Right ventricle myocardium superior (tissue), 1 donor: ENCODE measurements at regions of chr3 and their contacts with region 1.

Region 1: GRCh38 chr3:160754855-160755747 is 930 bp upstream of the PPM1L start:
- DNase-seq: peak; percentile 96
- ATAC-seq: peak; percentile 93

Region 2: DNA sequence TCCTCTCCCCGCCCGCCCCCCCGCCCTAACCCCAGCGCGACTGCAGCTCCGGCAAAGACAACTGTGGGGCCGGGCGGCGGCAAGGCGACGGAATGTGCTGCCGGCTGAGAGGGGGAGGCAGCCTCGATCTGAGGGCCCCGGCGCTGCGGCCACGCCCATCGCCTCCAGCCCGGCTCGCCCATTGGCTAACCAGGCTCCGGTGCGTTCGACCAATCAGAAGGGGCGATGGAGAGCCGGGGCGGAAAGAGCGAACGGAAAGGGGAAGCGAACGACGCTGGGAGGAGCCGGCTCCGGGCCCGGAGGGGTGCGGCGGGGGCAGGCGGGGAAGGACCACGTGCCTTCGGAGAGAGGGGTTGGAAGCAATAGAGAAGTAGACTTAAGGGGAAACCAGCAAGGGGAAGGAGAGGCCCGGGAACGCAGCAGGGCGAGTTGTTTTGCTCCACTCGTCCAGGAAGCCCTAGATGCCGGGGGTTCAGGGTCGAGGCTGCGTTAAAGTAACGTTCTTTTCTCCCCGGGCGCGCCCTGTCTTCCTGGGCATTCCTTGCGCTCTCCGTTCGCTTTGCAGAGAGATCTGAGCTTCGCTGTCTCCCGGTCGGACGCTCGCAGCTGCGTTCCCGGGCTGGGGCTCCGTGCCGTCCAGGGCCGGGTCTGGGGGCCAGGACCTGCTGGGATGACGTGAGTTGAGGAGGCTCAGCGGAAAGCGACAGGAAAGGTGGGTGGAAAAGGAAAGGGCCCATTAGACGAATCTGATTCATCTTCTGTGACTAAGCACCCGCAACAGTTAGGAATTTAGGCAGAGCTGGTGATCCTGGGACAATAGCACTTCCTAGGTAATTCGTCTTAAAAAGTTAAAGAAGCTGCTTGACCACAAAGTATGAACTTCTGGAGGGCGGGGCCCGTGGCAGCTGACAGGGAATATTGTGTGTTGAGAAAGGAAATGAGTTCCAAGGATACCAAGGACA is 189.4 kb before region 1 on chr3 and contains the start of gene KPNA4:
- intact Hi-C with region 1: loop called (anchors 10 kb)
- DNase-seq: peak; percentile 98
- ATAC-seq: peak; percentile 97
- total RNA-seq, gene KPNA4: 114 TPM

Region 3: DNA sequence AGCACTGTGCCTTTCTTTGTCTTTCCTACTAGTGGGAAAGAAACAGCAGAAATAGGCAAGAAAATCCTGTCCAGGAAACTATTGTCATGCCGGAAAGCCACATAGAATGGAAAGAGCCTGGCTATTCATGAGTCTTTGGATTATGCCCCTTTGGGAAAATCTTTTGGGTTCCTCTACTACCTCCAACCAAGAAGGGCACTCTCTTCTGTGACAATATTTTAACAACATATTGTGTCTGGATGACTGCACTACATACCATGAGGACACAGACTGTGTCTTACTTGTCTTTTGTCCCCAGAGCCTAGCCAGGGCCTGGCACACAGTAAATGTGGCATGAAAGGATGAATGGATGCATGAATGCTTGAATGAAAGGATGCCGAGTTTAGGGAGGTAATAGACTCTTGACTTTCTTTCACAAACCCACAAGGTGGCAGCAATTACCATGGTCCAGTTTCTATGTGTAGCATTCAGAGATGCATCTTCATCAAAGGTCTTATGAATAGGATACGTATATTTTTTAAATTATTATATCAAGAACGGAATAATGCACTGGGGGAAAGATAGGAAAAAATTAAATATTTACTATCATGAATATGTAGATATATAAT is 47.8 kb before region 1 on chr3:
- intact Hi-C with region 1: loop called (anchors 5 kb)
- DNase-seq: no peak
- ATAC-seq: peak; percentile 90

Region 4: GRCh38 chr3:160801386-160802118 is 46.5 kb after region 1 on chr3:
- intact Hi-C with region 1: loop called (anchors 10 kb)
- DNase-seq: peak; percentile 50
- ATAC-seq: peak; percentile 87

Region 5: GRCh38 chr3:160941885-160942494 is 186.9 kb after region 1 on chr3:
- intact Hi-C with region 1: loop called (anchors 10 kb)
- DNase-seq: no peak
- ATAC-seq: peak; percentile 94